ENCODE measurements at regions of chr12 and their contacts with region 1.

Region 1: DNA sequence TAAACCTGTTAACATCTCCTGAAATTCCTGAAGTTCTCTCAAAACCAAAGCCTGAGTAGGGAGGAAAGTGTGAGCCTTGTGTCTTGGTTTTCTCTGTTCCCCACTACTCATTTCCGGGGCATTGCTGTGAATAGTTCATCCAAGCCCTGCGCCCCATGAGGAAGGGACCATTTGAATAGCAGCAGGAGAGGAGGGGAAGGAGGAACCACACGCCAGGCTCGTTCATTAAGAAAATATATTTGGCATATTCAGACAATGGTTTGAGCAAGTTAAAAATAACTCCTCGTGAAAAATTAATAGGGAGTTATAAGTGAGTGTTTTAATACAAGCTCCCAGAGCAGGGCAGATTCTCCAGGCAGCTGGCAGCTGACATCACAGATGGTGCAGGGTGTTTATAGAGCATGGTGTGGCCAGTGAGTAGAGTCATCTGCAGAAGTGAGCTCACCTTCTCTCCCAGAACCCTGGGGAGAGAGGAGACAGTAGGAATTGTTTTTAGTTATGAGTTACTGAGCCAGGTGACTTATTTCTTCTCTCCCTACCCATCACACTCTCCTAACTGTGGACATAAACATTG is 29.5 kb upstream of the CISTR start:
- DNase-seq: no peak
- CTCF ChIP-seq: no peak

Region 2: GRCh38 chr12:53791735-53792326 is 10.5 kb after region 1 on chr12:
- CTCF ChIA-PET with region 1: interaction called, 11 read pairs
- POLR2A ChIA-PET with region 1: no interaction called
- DNase-seq: peak; percentile 19
- CTCF ChIP-seq: peak; percentile 51